Colonic mucosa (tissue), 4 donors: ENCODE measurements at regions of chr10 and their contacts with region 1.

Region 1: GRCh38 chr10:82377608-82378007 is 502.6 kb downstream of the NRG3 start:
- DNase-seq: no peak
- H3K4me3 ChIP-seq: no peak overlapping the region
- H3K27ac ChIP-seq: no peak overlapping the region
- H3K4me1 ChIP-seq: no peaks in the 10 kb centered on the region
- H3K27me3 ChIP-seq: no peaks in the 10 kb centered on the region
- CTCF ChIP-seq: no peak

Region 2: DNA sequence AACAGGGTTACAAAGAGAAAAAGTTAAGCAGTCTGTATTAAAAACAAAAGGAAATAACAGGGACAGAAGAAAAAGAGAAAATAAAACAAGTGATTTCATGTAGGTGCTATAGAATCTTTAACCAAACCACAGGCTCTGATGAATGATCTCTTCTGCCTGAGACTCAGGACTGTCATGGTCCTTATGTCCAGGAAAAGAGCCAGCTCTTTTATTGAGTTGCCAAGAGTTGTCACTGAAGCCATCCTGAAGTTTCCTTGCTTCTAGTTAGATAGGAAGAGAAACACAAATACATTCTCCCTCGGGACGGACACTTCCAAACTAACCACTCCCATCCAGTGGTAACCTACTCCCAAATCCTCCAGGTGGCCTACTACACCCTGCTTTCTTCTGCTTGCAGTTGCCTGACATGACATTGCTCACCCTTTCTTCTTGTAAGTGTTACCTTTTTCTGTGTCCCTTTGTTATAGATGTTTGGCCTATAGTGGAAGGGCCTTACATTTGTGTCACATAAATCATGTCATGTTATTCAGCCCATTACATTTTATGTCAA is 155.9 kb before region 1 on chr10:
- intact Hi-C with region 1: loop called (anchors 2 kb)
- DNase-seq: no peak
- H3K4me3 ChIP-seq: no peak overlapping the region
- H3K27ac ChIP-seq: no peak overlapping the region
- H3K4me1 ChIP-seq: no peaks in the 10 kb centered on the region
- H3K27me3 ChIP-seq: no peaks in the 10 kb centered on the region
- CTCF ChIP-seq: no peak